BJ (cell line): ENCODE measurements at regions of chr7 and their contacts with region 1.

Region 1: GRCh38 chr7:112869111-112869757 is 79.0 kb upstream of the TMEM168 start:
- DNase-seq: no peak
- H3K4me3 ChIP-seq: no peak overlapping the region
- H3K27me3 ChIP-seq: no peaks in the 10 kb centered on the region
- CTCF ChIP-seq: peak; percentile 77

Region 2: GRCh38 chr7:112880818-112881418 is 11.7 kb after region 1 on chr7:
- CTCF ChIA-PET with region 1: interaction called, 10 read pairs
- POLR2A ChIA-PET with region 1: no interaction called
- DNase-seq: no peak
- H3K4me3 ChIP-seq: no peak overlapping the region
- H3K27me3 ChIP-seq: no peaks in the 10 kb centered on the region
- CTCF ChIP-seq: no peak